Aorta (tissue), 5 donors: ENCODE measurements at regions of chr12 and their contacts with region 1.

Region 1: GRCh38 chr12:50504798-50505385 is at the start of gene DIP2B:
- DNase-seq: peak; percentile 97 to 99
- ATAC-seq: peak; percentile 98
- H3K4me3 ChIP-seq: peak within 1 kb of the TSS; percentile 61 to 76
- H3K27ac ChIP-seq: peak within 1 kb of the TSS; percentile 20 to 66
- H3K4me1 ChIP-seq: no peaks in the 10 kb centered on the region
- H3K27me3 ChIP-seq: no peaks in the 10 kb centered on the region
- total RNA-seq, gene DIP2B: 15.7 to 25.0 TPM

Region 2: GRCh38 chr12:50637870-50638481 is 133.1 kb after region 1 on chr12:
- intact Hi-C with region 1: loop called (anchors 2 kb)
- DNase-seq: no peak
- ATAC-seq: peak; percentile 76
- H3K4me3 ChIP-seq: no peak overlapping the region
- H3K27ac ChIP-seq: no peak overlapping the region
- H3K4me1 ChIP-seq: no peaks in the 10 kb centered on the region
- H3K27me3 ChIP-seq: no peaks in the 10 kb centered on the region

Region 3: GRCh38 chr12:50734409-50735263 is 229.7 kb after region 1 on chr12:
- intact Hi-C with region 1: loop called in 1 of 2 experiments (anchors 10 kb)
- DNase-seq: no peak
- ATAC-seq: no peak
- H3K4me3 ChIP-seq: no peak overlapping the region
- H3K27ac ChIP-seq: no peak overlapping the region
- H3K4me1 ChIP-seq: no peaks in the 10 kb centered on the region
- H3K27me3 ChIP-seq: no peaks in the 10 kb centered on the region

Region 4: DNA sequence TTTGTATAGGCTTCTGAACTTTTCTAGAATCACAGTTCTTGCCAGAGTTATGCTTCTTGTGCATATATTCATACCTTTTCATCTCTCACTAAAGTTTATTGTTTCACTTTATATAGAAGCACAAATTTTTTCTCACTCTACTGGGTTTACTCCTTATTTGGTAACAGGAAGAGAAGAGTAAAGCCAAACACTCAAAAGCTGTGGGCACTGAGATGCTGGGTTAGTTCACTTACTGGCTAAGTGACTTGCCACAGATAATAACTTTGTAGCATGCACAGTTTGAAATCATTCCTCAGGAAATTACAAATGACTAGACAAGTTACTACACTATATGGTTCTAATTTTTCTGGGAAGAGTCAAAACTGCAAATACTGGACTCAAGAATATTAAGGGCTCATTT is 455.2 kb after region 1 on chr12:
- intact Hi-C with region 1: no loop called
- DNase-seq: no peak
- ATAC-seq: no peak
- H3K4me3 ChIP-seq: no peak overlapping the region
- H3K27ac ChIP-seq: no peak overlapping the region
- H3K4me1 ChIP-seq: no peaks in the 10 kb centered on the region
- H3K27me3 ChIP-seq: no peaks in the 10 kb centered on the region